ACHN (cell line): ENCODE measurements at regions of chr12 and their contacts with region 1.

Region 1: GRCh38 chr12:26997003-26997402 is 17.2 kb downstream of the TM7SF3 start:
- DNase-seq: no peak

Region 2: GRCh38 chr12:26953447-26953846 is 43.6 kb before region 1 on chr12:
- in situ Hi-C with region 1: loop called (anchors 5 kb)
- DNase-seq: no peak